Activated CD4-positive, alpha-beta memory T cell treated with anti-CD3 and anti-CD28 coated beads for 36 hours (primary cell): ENCODE measurements at regions of chr6 and their contacts with region 1.

Region 1: DNA sequence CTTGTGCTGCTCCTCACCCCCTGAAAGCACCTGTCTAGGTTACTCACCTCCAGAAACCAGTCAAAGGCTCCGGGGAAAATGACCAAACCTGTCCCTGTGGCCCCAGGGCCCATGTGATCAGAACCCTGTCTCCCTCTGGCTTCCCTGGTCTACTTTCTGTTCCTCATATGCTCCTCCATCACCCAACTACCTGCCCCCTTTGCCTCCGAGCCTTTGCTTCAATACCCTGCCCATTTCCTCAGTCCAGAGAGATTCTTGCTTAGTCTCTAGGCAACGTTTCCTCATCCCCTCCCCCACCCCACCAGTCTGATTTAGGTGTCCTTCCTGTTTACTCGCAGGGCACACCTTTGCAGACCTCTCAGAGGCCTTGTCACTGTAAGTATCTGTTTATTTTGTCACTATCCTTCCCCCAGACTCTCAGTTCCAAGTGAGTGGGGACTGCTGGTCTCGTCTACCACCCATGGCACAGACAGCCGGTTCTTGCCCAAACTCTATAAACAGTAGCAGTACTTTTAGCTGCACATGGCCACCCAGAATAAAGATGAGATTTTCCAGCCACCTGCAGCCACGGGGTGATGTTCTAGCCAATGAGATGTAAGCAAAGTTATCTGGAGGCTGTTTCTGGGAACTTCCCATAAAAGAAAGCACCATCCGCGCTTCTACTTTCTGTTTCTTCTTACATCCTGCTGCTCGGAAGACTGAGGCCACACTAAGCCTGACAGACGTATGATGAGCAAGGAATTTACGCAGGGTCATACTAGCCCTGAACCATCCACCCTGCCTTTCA is 13.3 kb downstream of the ELOVL5 start:
- DNase-seq: peak; percentile 85
- H3K4me3 Mint-ChIP-seq: peak overlapping the region; percentile 78
- H3K27ac Mint-ChIP-seq: peak overlapping the region; percentile 99
- H3K4me1 Mint-ChIP-seq: peaks cover 90% of the 10 kb centered on the region
- H3K27me3 Mint-ChIP-seq: no peaks in the 10 kb centered on the region

Region 2: DNA sequence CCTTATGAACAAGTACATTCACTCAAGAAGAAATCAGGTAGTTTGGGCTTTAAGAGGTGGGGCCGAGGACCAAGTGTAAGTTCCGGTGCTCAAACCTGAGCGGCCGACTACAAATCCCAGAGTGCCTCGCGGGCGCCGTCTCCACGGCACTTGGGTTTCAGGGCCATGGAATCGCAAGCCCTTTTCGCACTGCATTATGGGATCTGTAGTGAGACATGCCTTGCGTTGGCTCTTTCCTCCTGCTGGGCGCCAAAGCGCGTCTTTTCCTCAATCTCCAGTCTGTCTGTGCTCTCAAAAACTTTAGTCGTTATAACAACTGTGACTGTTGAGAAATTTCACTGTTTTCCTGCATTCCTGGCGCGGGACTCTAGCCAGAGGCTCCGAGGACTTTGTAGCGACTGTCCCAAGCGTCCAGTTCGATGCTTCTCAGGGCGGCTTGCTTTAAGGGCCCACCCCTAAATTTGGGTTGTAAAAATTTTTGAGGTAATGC is 270.6 kb before region 1 on chr6:
- CTCF ChIA-PET with region 1: no interaction called
- POLR2A ChIA-PET with region 1: no interaction called
- intact Hi-C with region 1: no loop called
- DNase-seq: peak; percentile 98
- H3K4me3 Mint-ChIP-seq: peak overlapping the region; percentile 100
- H3K27ac Mint-ChIP-seq: peak overlapping the region; percentile 97
- H3K4me1 Mint-ChIP-seq: peaks cover 52% of the 10 kb centered on the region
- H3K27me3 Mint-ChIP-seq: no peaks in the 10 kb centered on the region

Region 3: GRCh38 chr6:53294095-53294494 is 41.3 kb before region 1 on chr6:
- CTCF ChIA-PET with region 1: no interaction called
- POLR2A ChIA-PET with region 1: interaction called, 4 read pairs
- intact Hi-C with region 1: loop called (anchors 2 kb)
- DNase-seq: no peak
- H3K4me3 Mint-ChIP-seq: no peak overlapping the region
- H3K27ac Mint-ChIP-seq: no peak overlapping the region
- H3K4me1 Mint-ChIP-seq: peaks cover 77% of the 10 kb centered on the region
- H3K27me3 Mint-ChIP-seq: no peaks in the 10 kb centered on the region

Region 4: DNA sequence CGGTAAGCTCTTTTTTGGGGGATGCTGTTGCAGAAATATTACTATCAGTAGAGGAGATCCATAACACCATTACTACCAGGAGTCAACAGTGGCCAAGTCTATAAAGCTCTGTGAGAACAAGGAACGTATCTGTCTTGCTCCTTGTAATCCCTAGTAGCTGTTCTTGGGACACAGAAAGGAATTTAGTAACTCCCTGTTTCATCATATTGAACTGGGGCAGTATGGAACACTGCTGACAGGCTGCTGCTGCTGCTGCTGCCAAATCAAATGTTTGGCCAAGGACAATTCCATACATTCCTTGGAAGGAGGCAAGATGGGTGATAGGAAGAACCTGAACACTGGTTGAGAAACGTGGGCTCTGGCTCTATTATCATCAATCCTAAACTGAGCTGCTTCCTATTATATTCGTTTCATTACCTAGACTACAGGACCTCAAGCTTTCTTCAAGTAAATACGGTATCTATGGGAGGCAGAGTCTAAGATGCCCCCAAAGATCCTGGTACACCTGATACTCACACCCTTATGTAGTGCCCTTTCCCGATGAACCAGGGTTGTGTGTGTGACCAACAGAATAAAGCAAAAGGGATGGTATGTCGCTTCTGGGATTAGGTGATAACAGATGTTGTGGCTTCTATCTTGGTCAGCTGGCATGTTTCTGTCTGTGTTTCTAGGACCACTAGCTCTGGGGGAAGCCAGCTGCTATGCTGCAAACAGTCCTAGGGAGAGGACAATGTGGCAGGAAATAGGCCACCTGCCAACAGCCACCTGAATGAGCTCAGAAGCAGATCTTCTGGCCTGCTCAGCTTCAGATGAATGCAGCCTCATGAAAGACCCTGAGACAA is 26.1 kb before region 1 on chr6:
- CTCF ChIA-PET with region 1: interaction called, 3 read pairs
- POLR2A ChIA-PET with region 1: interaction called, 4 read pairs
- intact Hi-C with region 1: loop called (anchors 1 kb)
- DNase-seq: no peak
- H3K4me3 Mint-ChIP-seq: no peak overlapping the region
- H3K27ac Mint-ChIP-seq: peak overlapping the region; percentile 44
- H3K4me1 Mint-ChIP-seq: peaks cover 80% of the 10 kb centered on the region
- H3K27me3 Mint-ChIP-seq: no peaks in the 10 kb centered on the region

Region 5: GRCh38 chr6:53348371-53349208 is 13.2 kb after region 1 on chr6 and contains the start of gene ELOVL5:
- CTCF ChIA-PET with region 1: interaction called, 20 read pairs
- POLR2A ChIA-PET with region 1: interaction called, 49 read pairs
- intact Hi-C with region 1: loop called (anchors 1 kb)
- DNase-seq: peak; percentile 98
- H3K4me3 Mint-ChIP-seq: peak within 1 kb of the TSS; percentile 93
- H3K27ac Mint-ChIP-seq: peak within 1 kb of the TSS; percentile 95
- H3K4me1 Mint-ChIP-seq: peaks cover 43% of the 10 kb centered on the region
- H3K27me3 Mint-ChIP-seq: no peaks in the 10 kb centered on the region
- total RNA-seq, gene ELOVL5: 112 to 121 TPM

Region 6: GRCh38 chr6:53530346-53530745 is 194.9 kb after region 1 on chr6:
- CTCF ChIA-PET with region 1: no interaction called
- POLR2A ChIA-PET with region 1: no interaction called
- intact Hi-C with region 1: no loop called
- DNase-seq: no peak
- H3K4me3 Mint-ChIP-seq: no peak overlapping the region
- H3K27ac Mint-ChIP-seq: no peak overlapping the region
- H3K4me1 Mint-ChIP-seq: peaks cover 37% of the 10 kb centered on the region
- H3K27me3 Mint-ChIP-seq: no peaks in the 10 kb centered on the region